A549 (cell line): ENCODE measurements at regions of chr2 and their contacts with region 1.

Region 1: GRCh38 chr2:241877989-241878970 is 8.8 kb downstream of the RTP5 start:
- DNase-seq: peak; percentile 73 to 77
- ATAC-seq: peak; percentile 59 to 65
- H3K4me3 ChIP-seq: no peak overlapping the region
- H3K27ac ChIP-seq: peak overlapping the region in 1 of 2 experiments; percentile 64; a peak in 1 of 6 replicates
- H3K4me1 ChIP-seq: peaks cover 10% of the 10 kb centered on the region; the same call in 2 of the 3 replicates
- CTCF ChIP-seq: peak; percentile 57
- EP300 ChIP-seq: no peak
- POLR2A ChIP-seq: no peak
- RAD21 ChIP-seq: peak; percentile 76 to 78

Region 2: DNA sequence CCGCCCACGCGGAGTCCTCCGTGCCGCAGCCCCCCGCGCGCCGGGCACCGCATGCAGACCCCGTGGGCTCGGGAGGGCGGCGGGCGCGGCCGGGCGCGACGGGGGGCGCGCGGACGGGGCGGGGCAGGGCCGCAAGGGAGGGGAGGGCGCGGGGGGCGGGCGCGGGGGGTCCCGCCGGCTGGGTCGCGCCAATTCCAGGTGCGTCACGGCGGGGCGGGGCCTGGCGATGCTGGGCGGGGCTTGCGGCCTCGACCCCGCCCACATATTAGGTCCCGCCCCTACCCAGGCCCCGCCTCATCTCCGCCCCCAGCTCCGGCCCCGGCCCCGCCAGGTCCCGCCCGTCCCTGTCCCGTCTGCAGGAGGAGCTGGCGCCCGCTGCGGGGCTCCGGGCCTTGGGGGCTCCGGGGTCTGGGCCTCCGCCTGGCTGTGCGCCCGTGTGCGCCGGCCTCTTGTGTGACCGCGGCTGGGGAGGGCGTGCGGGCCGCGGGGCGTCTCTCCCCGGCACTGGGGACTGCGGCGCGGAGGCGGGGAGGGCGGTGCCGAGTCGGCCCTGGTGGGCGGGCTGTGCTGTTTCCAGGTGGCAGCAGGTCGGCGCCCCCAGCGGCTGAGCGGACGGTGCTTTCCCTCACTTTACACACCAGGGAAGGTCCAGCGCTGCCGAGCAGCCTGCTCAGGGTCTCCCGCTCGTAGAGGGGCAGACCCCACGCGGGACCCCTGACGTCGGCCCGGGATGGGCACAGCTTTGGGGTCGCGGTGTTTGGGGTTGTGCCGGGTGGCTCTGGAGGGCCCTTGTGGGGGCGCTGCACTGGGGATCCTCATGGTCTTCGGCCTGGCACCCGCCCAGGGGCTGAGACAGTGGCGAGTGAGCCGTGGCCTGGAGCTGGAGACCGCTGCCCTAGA is 175.9 kb before region 1 on chr2:
- CTCF ChIA-PET with region 1: interaction called, 15 read pairs
- POLR2A ChIA-PET with region 1: interaction called, 7 read pairs
- DNase-seq: peak; percentile 80 to 89
- ATAC-seq: peak; percentile 79 to 85
- H3K4me3 ChIP-seq: peak overlapping the region; percentile 91
- H3K27ac ChIP-seq: peak overlapping the region; percentile 96 to 100
- H3K4me1 ChIP-seq: peaks cover 15% of the 10 kb centered on the region
- CTCF ChIP-seq: peak; percentile 49
- EP300 ChIP-seq: no peak
- POLR2A ChIP-seq: no peak
- RAD21 ChIP-seq: no peak

Region 3: GRCh38 chr2:241734467-241735208 is 143.6 kb before region 1 on chr2 and contains the start of gene D2HGDH:
- CTCF ChIA-PET with region 1: interaction called, 18 read pairs
- POLR2A ChIA-PET with region 1: no interaction called
- DNase-seq: peak; percentile 63 to 86
- ATAC-seq: peak; percentile 74 to 83
- H3K4me3 ChIP-seq: peak within 1 kb of the TSS; percentile 97
- H3K27ac ChIP-seq: peak within 1 kb of the TSS; percentile 99
- H3K4me1 ChIP-seq: peaks cover 5% of the 10 kb centered on the region; the same call in 1 of the 3 replicates
- CTCF ChIP-seq: no peak
- EP300 ChIP-seq: no peak
- POLR2A ChIP-seq: peak; percentile 92
- RAD21 ChIP-seq: no peak
- polyA plus RNA-seq, gene D2HGDH: 6.5 and 7.0 TPM in 2 replicates

Region 4: DNA sequence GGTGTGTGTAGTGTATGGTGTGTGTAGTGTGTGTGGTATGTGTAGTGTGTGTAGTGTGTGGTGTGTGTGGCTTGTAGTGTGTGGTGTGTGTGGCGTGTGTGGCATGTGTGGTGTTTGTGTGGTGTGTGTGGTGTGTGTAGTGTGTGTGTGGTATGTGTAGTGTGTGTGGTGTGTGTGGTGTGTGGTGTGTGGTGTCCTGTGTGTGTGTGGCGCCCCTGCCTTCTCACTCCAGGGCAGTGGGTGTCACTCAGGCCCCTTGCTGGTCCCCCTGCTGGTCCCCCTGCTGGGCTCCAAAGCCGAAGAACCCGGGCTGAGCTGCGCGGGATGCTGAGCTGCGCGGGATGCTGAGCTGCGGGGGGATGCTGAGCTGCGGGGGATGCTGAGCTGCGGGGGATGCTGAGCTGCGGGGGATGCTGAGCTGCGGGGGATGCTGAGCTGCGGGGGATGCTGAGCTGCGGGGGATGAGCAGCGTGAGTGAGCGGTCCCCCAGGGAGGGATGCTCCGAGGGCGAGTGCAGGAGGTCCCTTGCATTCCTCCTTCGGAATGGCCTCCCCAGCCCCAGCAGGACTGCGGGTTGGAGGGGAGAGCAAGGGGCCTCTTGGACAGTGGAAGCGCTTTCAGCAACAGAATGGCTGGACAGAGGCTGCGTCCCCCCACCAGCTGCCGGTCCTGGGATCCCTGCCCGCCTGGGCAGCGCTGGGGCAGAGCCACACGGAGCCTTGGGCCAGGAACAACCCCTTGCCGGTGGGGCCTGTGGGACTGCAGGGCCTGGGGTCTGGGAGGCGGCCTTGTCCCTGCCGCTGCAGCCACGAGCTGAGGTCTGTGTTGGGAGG is 12.1 kb before region 1 on chr2:
- CTCF ChIA-PET with region 1: interaction called, 28 read pairs
- POLR2A ChIA-PET with region 1: no interaction called
- DNase-seq: peak; percentile 47 to 55
- ATAC-seq: peak; percentile 37 to 51
- H3K4me3 ChIP-seq: no peak overlapping the region
- H3K27ac ChIP-seq: no peak overlapping the region
- H3K4me1 ChIP-seq: peaks cover 11% of the 10 kb centered on the region; the same call in 2 of the 3 replicates
- CTCF ChIP-seq: no peak
- EP300 ChIP-seq: no peak
- POLR2A ChIP-seq: no peak
- RAD21 ChIP-seq: no peak

Region 5: GRCh38 chr2:241892299-241893137 is 14.2 kb after region 1 on chr2:
- CTCF ChIA-PET with region 1: interaction called, 13 read pairs
- POLR2A ChIA-PET with region 1: no interaction called
- DNase-seq: no peak
- ATAC-seq: no peak
- H3K4me3 ChIP-seq: no peak overlapping the region
- H3K27ac ChIP-seq: no peak overlapping the region
- H3K4me1 ChIP-seq: no peaks in the 10 kb centered on the region
- CTCF ChIP-seq: no peak
- EP300 ChIP-seq: no peak
- POLR2A ChIP-seq: no peak
- RAD21 ChIP-seq: no peak